ENCODE measurements at regions of chr7 and their contacts with region 1.

Region 1: DNA sequence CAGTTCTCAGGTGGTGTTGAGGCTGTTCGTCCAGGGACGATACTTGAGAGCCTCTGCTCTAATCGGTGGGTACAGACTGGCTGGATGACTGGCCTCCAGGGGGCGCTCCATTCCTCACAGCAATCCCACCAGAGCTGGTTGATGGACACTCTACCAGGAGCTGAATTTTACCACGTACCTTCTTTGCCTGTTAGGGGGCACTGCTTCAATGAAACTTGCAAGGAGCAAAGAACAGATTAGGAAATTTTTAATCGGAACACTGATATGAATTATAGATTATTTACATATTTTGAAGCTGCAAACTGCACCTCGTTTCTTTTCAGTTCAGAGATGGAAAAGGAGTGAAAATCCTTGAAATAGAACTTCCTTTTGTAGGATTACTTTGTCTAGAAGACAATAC is 44.9 kb downstream of the KBTBD2 start:
- DNase-seq: peak; percentile 76 to 88
- ATAC-seq: peak; percentile 99 to 100
- H3K4me3 ChIP-seq: peak overlapping the region in 1 of 4 donors; percentile 35
- H3K27ac ChIP-seq: no peak overlapping the region
- H3K4me1 ChIP-seq: no peaks in the 10 kb centered on the region
- H3K27me3 ChIP-seq: no peaks in the 10 kb centered on the region
- CTCF ChIP-seq: peak; percentile 88 to 95 (median 90)
- POLR2A ChIP-seq: no peak

Region 2: DNA sequence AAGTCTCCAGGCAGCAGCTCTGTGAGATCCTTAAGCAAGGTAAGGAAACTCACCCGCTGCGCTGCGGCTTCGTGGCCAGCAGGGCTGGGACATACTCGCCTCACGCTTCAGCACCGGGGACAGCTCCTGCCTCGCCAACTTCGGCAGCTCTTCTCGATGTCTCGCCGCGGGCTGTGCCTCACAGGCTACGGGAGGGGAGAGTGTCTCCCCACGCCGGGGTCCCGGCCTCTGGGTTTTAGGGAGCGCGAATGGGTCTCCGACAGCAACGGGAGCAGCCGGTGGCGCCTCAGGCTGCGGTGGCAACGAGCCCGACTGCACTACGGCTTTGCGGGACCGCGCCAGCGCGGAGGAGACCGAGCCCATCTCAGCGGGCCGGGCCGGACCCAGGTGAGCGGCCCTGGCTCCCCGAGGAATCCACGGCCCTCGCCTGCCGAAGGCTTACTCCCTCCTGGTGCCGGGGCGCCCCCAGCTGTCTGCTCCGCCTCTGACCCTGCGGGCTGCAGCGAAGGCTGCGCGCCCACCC is 418.9 kb before region 1 on chr7:
- in situ Hi-C with region 1: no loop called
- intact Hi-C with region 1: no loop called
- DNase-seq: peak; percentile 12 to 14
- ATAC-seq: no peak
- H3K4me3 ChIP-seq: no peak overlapping the region
- H3K27ac ChIP-seq: no peak overlapping the region
- H3K4me1 ChIP-seq: no peaks in the 10 kb centered on the region
- H3K27me3 ChIP-seq: peaks cover 22 to 48% (median 26%) of the 10 kb centered on the region in 3 donors
- CTCF ChIP-seq: no peak
- POLR2A ChIP-seq: no peak

Region 3: GRCh38 chr7:32447218-32447617 is 399.5 kb before region 1 on chr7:
- in situ Hi-C with region 1: no loop called
- intact Hi-C with region 1: no loop called
- DNase-seq: no peak
- ATAC-seq: no peak
- H3K4me3 ChIP-seq: no peak overlapping the region
- H3K27ac ChIP-seq: no peak overlapping the region
- H3K4me1 ChIP-seq: no peaks in the 10 kb centered on the region
- H3K27me3 ChIP-seq: no peaks in the 10 kb centered on the region
- CTCF ChIP-seq: no peak
- POLR2A ChIP-seq: no peak

Region 4: GRCh38 chr7:32803406-32804141 is 43.1 kb before region 1 on chr7:
- in situ Hi-C with region 1: no loop called
- intact Hi-C with region 1: loop called (anchors 5 kb)
- DNase-seq: no peak
- ATAC-seq: no peak
- H3K4me3 ChIP-seq: no peak overlapping the region
- H3K27ac ChIP-seq: no peak overlapping the region
- H3K4me1 ChIP-seq: no peaks in the 10 kb centered on the region
- H3K27me3 ChIP-seq: no peaks in the 10 kb centered on the region
- CTCF ChIP-seq: no peak
- POLR2A ChIP-seq: no peak

Region 5: GRCh38 chr7:32937344-32938174 is 90.9 kb after region 1 on chr7:
- in situ Hi-C with region 1: loop called in 2 of 4 experiments (anchors 10 to 25 kb)
- intact Hi-C with region 1: no loop called
- DNase-seq: peak; percentile 38 to 47
- ATAC-seq: peak; percentile 33 to 58
- H3K4me3 ChIP-seq: no peak overlapping the region
- H3K27ac ChIP-seq: peak overlapping the region; percentile 10 to 75 (median 44)
- H3K4me1 ChIP-seq: peaks cover 28 to 40% of the 10 kb centered on the region in 2 donors
- H3K27me3 ChIP-seq: no peaks in the 10 kb centered on the region
- CTCF ChIP-seq: no peak
- POLR2A ChIP-seq: no peak

Region 6: GRCh38 chr7:32957326-32958045 is 110.8 kb after region 1 on chr7 and contains the start of gene FKBP9:
- in situ Hi-C with region 1: no loop called
- intact Hi-C with region 1: loop called (anchors 5 kb)
- DNase-seq: peak; percentile 59 to 68
- ATAC-seq: peak; percentile 83 to 84
- H3K4me3 ChIP-seq: peak within 1 kb of the TSS; percentile 72 to 97 (median 84)
- H3K27ac ChIP-seq: peak within 1 kb of the TSS; percentile 76 to 93 (median 88)
- H3K4me1 ChIP-seq: peaks cover 8 to 16% of the 10 kb centered on the region in 2 donors
- H3K27me3 ChIP-seq: no peaks in the 10 kb centered on the region
- CTCF ChIP-seq: no peak
- POLR2A ChIP-seq: peak; percentile 44 to 59
- total RNA-seq, gene FKBP9: 32.1 to 72.1 (median 35.3) TPM

Region 7: GRCh38 chr7:33050535-33051318 is 204.0 kb after region 1 on chr7:
- in situ Hi-C with region 1: no loop called
- intact Hi-C with region 1: loop called (anchors 5 kb)
- DNase-seq: no peak
- ATAC-seq: peak; percentile 75 to 79
- H3K4me3 ChIP-seq: peak overlapping the region; percentile 20 to 34 (median 28)
- H3K27ac ChIP-seq: peak overlapping the region; percentile 74 to 81 (median 75)
- H3K4me1 ChIP-seq: peaks cover 36 to 42% of the 10 kb centered on the region in 2 donors
- H3K27me3 ChIP-seq: no peaks in the 10 kb centered on the region
- CTCF ChIP-seq: peak; percentile 45 to 86 (median 61)
- POLR2A ChIP-seq: no peak

Region 8: GRCh38 chr7:33185786-33186185 is 339.1 kb after region 1 on chr7:
- in situ Hi-C with region 1: no loop called
- intact Hi-C with region 1: no loop called
- DNase-seq: no peak
- ATAC-seq: peak in 1 of 2 donors; percentile 51
- H3K4me3 ChIP-seq: no peak overlapping the region
- H3K27ac ChIP-seq: no peak overlapping the region
- H3K4me1 ChIP-seq: no peaks in the 10 kb centered on the region
- H3K27me3 ChIP-seq: no peaks in the 10 kb centered on the region
- CTCF ChIP-seq: peak in 4 of 5 experiments; percentile 36 to 58 (median 46)
- POLR2A ChIP-seq: no peak